Activated T-helper 1 cell treated with anti-CD3 and anti-CD28 coated beads, Interleukin-12 subunit alpha, Interleukin-12 subunit beta, Interleukin-2, Interleukin-4 antibody, amounts not matched to agents 30 ng/mL and 10 ng/mL and 1 ng/mL, durations not matched to agents 14 hours and 24 hours and 36 hours (primary cell): ENCODE measurements at regions of chr1 and their contacts with region 1.

Region 1: GRCh38 chr1:167136191-167136614 is 42.3 kb downstream of the STYXL2 start:
- DNase-seq: no peak
- H3K4me3 Mint-ChIP-seq: no peak overlapping the region
- H3K27ac Mint-ChIP-seq: no peak overlapping the region
- H3K4me1 Mint-ChIP-seq: no peaks in the 10 kb centered on the region
- H3K27me3 Mint-ChIP-seq: peaks cover 33% of the 10 kb centered on the region

Region 2: DNA sequence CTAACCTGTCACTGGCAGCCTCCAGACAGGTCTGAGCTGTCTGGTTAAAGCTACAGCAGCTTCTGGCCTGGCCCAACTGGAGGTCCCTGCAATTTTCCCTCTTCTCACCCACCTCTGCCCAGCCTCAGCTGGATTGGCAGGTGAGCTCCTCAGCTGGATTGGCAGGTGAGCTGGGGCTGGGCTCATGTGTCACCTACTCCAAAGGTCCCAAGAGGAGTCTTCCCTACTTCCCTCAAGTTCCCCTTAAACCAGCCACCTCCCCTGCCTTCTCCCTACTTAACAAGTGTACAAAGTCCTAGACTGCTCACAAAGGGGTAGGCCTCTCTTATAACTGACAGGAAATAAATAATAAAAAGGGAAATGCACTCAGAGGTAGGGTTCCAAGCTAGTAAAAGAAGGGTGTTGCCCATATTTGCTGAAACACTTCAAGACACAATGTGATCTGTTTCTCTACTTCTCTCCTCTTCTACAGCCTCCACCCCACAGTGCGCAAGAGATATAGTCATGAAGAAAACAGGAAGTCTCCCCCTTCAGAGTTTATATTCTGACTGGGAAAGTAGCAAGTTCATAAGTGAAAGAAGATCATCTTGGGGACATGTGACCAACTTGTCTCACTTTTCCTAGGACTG is 45.8 kb before region 1 on chr1 and contains the start of gene GPA33:
- intact Hi-C with region 1: no loop called
- DNase-seq: no peak
- H3K4me3 Mint-ChIP-seq: peak within 1 kb of the TSS; percentile 34
- H3K27ac Mint-ChIP-seq: peak within 1 kb of the TSS; percentile 85
- H3K4me1 Mint-ChIP-seq: peaks cover 10% of the 10 kb centered on the region
- H3K27me3 Mint-ChIP-seq: no peaks in the 10 kb centered on the region
- total RNA-seq, gene GPA33: 0.07 and 0.08 TPM in 2 replicates

Region 3: GRCh38 chr1:167207940-167208623 is 71.9 kb after region 1 on chr1:
- intact Hi-C with region 1: loop called (anchors 5 kb)
- DNase-seq: no peak
- H3K4me3 Mint-ChIP-seq: no peak overlapping the region
- H3K27ac Mint-ChIP-seq: no peak overlapping the region
- H3K4me1 Mint-ChIP-seq: peaks cover 8% of the 10 kb centered on the region
- H3K27me3 Mint-ChIP-seq: no peaks in the 10 kb centered on the region